H1 (cell line): ENCODE measurements at regions of chr1 and their contacts with region 1.

Region 1: DNA sequence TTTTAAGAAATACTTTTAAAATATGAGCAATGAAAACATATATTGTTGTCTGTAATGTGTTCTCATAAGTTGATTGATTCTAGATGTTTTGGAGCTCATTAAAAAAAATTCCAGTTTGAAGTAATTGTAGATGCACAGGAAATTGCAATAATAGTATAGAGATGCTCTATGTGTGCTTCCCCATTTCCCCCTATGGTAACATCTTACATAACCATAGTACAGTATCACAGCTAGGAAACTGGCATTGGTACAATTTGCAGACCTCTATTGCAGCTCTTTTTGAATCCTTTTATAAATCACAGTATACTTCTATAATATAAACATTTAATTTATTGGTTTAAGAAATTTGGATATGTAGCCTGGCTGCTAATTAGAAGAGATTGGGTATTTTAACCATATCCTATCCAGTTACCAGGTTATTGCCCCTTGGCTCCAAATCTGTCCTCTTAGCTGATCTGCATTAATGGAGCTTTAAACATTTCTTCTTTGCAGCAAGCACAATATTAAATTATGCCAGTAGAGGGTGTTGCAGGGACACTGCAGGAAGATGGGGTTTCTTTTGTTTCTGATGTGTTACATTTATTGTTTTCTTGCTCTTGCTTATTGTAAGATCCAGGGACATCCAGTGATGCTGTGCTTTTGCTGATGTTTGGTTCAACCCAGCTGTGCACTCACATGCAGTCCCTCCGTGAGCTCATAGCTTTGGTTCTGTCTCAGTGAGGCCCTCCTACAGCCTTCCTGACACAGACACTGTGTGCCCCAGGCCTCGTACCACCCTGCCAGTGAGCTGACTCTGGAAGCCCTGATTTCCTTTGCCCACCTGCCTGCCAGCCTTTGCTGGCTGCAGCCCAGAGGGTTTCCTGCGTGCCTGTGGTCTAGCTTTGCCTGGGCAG is 103.3 kb downstream of the RABGAP1L start:
- DNase-seq: peak in 1 of 2 experiments; percentile 55
- H3K4me3 ChIP-seq: no peak overlapping the region
- H3K27ac ChIP-seq: no peak overlapping the region
- H3K4me1 ChIP-seq: no peaks in the 10 kb centered on the region
- H3K27me3 ChIP-seq: no peaks in the 10 kb centered on the region
- CTCF ChIP-seq: peak in 2 of 3 experiments; percentile 46 to 69; a peak in 2 of 4 replicates
- EP300 ChIP-seq: no peak
- POLR2A ChIP-seq: no peak
- RAD21 ChIP-seq: peak; percentile 71 to 79

Region 2: GRCh38 chr1:174273190-174273589 is 10.6 kb after region 1 on chr1:
- CTCF ChIA-PET with region 1: interaction called, 18 read pairs
- POLR2A ChIA-PET with region 1: no interaction called
- DNase-seq: no peak
- H3K4me3 ChIP-seq: no peak overlapping the region
- H3K27ac ChIP-seq: no peak overlapping the region
- H3K4me1 ChIP-seq: no peaks in the 10 kb centered on the region
- H3K27me3 ChIP-seq: no peaks in the 10 kb centered on the region
- CTCF ChIP-seq: no peak
- EP300 ChIP-seq: no peak
- POLR2A ChIP-seq: no peak
- RAD21 ChIP-seq: no peak

Region 3: GRCh38 chr1:174726167-174726879 is 463.7 kb after region 1 on chr1:
- CTCF ChIA-PET with region 1: interaction called, 32 read pairs
- POLR2A ChIA-PET with region 1: no interaction called
- DNase-seq: no peak
- H3K4me3 ChIP-seq: no peak overlapping the region
- H3K27ac ChIP-seq: no peak overlapping the region
- H3K4me1 ChIP-seq: peaks cover 0 to 7% (median 2%) of the 10 kb centered on the region in 4 experiments; a peak in 2 of 7 replicates
- H3K27me3 ChIP-seq: no peaks in the 10 kb centered on the region
- CTCF ChIP-seq: peak in 2 of 3 experiments; percentile 24 to 32; a peak in 2 of 4 replicates
- EP300 ChIP-seq: no peak
- POLR2A ChIP-seq: no peak
- RAD21 ChIP-seq: peak in 1 of 2 experiments; percentile 56

Region 4: DNA sequence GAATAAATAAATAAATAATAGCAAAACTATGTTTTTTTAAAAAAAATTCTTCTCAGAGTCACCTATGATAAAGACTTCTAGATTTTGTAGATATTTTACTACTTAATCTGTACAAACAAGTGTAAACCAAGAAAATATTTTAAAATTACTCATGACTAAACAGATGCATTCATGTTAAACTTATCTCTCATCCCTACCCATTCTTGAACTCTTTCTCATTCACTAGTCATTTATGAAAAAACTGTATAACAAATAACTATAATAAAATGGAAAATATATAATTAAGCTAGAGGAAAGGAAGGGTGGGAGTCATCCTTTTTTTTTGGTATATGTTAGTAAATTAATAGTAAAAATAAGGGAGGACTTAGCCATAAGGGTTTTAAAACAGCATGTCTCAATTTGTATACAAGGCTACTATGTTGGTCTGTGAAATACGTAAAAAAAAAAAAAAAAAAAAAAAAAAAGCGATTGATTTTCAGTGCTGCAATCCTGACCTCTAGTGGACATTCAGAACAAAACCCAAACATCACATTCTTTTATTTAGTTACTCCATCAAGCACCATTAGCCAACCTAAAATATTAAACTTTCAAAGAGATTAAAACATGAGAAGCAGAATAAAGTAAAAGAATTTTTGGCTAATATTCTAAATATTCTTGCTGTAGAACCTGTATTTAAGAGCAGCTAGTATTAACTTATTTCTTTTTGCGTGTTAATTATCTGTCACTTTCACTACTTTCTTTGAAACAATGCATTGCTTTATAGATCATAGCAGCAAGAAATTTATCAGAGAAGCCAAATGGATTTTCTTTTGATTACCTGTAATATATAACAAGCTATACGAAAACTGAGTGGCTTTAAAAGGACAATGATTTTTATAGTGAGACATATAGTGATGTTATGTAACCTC is 481.3 kb after region 1 on chr1:
- CTCF ChIA-PET with region 1: interaction called, 40 read pairs
- POLR2A ChIA-PET with region 1: no interaction called
- DNase-seq: no peak
- H3K4me3 ChIP-seq: no peak overlapping the region
- H3K27ac ChIP-seq: no peak overlapping the region
- H3K4me1 ChIP-seq: no peaks in the 10 kb centered on the region
- H3K27me3 ChIP-seq: no peaks in the 10 kb centered on the region
- CTCF ChIP-seq: peak in 2 of 3 experiments; percentile 47 to 48; a peak in 2 of 4 replicates
- EP300 ChIP-seq: no peak
- POLR2A ChIP-seq: no peak
- RAD21 ChIP-seq: peak; percentile 76 to 88